ENCODE measurements at regions of chr22 and their contacts with region 1.

Region 1: DNA sequence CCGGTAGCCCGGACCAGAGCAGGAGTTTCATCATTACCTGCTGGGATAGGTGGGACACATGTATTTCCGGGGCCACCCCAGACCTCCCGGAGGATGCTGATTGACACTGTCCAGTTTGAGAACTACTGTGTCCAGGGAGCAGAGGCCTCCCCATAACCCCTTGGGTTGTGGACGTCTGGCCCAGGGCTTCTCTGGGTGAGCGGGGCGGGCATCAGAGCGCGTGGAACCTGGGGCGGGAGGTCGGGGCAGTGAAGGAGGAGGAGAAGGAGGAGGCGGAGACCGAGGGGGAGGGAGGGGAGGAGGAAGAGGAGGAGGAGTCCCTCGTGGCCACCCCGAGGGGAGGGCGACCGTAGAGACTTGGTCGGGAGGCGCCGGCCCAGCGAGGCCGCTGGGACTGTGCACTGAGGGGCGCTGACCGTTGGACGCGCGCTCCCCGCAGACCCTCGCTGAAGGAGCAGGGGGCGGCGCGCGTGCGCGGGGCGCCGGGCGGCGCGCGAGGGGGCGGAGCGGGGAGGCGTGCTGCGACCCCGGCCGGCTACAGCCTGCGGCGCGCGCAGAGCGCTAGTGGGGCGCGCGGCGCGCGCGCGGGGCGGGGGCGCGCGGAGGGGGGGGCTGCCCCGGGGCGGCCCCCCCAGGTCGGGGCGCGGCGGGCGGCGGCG is at the start of gene GRK3:
- DNase-seq: peak; percentile 77
- H3K4me3 ChIP-seq: peak within 1 kb of the TSS; percentile 96
- H3K27ac ChIP-seq: peak within 1 kb of the TSS; percentile 81
- H3K4me1 ChIP-seq: peaks cover 52% of the 10 kb centered on the region
- CTCF ChIP-seq: no peak
- total RNA-seq, gene GRK3: 11.1 and 14.2 TPM in 2 replicates

Region 2: DNA sequence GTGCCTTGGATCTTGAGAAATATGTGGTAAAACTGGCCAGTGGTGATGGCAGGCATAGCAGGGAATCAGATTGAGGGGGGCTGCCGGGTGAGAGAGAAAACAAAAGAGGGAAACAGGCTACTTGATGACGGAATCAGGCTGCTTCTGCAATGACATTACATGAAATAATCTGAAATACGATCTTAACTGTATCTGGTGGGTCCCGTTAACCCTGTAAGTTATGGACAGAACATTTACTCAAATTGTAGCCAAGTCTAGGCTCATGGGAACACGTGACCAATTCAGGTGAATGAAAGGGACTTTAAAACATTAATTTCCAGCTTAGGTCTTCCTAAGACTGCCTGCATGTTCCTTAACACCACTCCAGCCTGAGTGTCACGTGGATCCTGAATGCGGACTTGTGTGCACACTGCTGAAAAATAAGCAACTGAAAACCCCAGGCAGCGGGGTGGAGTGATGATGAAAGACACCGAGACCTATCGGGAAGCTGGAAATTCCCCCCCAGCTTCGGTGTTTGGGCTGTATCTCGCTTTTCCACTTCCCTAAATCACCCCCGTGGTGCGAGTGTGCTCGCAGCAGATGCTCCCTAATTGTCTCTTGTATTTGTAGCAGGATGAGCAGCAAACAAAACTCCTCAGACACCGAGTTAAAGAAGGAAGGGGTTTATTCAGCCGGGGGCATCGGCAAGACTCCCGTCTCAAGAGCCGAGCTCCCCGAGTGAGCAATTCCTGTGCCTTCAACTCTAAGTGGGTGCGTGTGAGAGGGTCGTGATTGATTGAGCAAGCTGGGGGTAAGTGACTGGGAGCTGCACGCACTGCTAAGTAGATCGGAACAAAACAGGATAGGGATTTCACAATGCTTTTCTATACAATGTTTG is 145.0 kb before region 1 on chr22:
- CTCF ChIA-PET with region 1: no interaction called
- POLR2A ChIA-PET with region 1: interaction called, 3 read pairs
- intact Hi-C with region 1: loop called (anchors 2 kb)
- DNase-seq: peak; percentile 9
- H3K4me3 ChIP-seq: peak overlapping the region; percentile 34
- H3K27ac ChIP-seq: no peak overlapping the region
- H3K4me1 ChIP-seq: peaks cover 32% of the 10 kb centered on the region
- CTCF ChIP-seq: no peak

Region 3: GRCh38 chr22:25465949-25466348 is 98.5 kb before region 1 on chr22:
- CTCF ChIA-PET with region 1: no interaction called
- POLR2A ChIA-PET with region 1: no interaction called
- intact Hi-C with region 1: loop called (anchors 2 kb)
- DNase-seq: no peak
- H3K4me3 ChIP-seq: no peak overlapping the region
- H3K27ac ChIP-seq: no peak overlapping the region
- H3K4me1 ChIP-seq: no peaks in the 10 kb centered on the region
- CTCF ChIP-seq: no peak

Region 4: GRCh38 chr22:25627271-25627852 is 62.9 kb after region 1 on chr22:
- CTCF ChIA-PET with region 1: no interaction called
- POLR2A ChIA-PET with region 1: no interaction called
- intact Hi-C with region 1: loop called (anchors 5 kb)
- DNase-seq: peak; percentile 43
- H3K4me3 ChIP-seq: peak overlapping the region; percentile 18
- H3K27ac ChIP-seq: peak overlapping the region; percentile 71
- H3K4me1 ChIP-seq: peaks cover 46% of the 10 kb centered on the region
- CTCF ChIP-seq: no peak

Region 5: GRCh38 chr22:25658633-25659032 is 94.2 kb after region 1 on chr22:
- CTCF ChIA-PET with region 1: no interaction called
- POLR2A ChIA-PET with region 1: no interaction called
- intact Hi-C with region 1: loop called (anchors 2 kb)
- DNase-seq: no peak
- H3K4me3 ChIP-seq: no peak overlapping the region
- H3K27ac ChIP-seq: no peak overlapping the region
- H3K4me1 ChIP-seq: peaks cover 14% of the 10 kb centered on the region
- CTCF ChIP-seq: no peak

Region 6: GRCh38 chr22:25702040-25702439 is 137.6 kb after region 1 on chr22:
- CTCF ChIA-PET with region 1: no interaction called
- POLR2A ChIA-PET with region 1: interaction called, 3 read pairs
- intact Hi-C with region 1: loop called (anchors 5 kb)
- DNase-seq: peak; percentile 30
- H3K4me3 ChIP-seq: no peak overlapping the region
- H3K27ac ChIP-seq: no peak overlapping the region
- H3K4me1 ChIP-seq: peaks cover 3% of the 10 kb centered on the region
- CTCF ChIP-seq: peak; percentile 83

Region 7: DNA sequence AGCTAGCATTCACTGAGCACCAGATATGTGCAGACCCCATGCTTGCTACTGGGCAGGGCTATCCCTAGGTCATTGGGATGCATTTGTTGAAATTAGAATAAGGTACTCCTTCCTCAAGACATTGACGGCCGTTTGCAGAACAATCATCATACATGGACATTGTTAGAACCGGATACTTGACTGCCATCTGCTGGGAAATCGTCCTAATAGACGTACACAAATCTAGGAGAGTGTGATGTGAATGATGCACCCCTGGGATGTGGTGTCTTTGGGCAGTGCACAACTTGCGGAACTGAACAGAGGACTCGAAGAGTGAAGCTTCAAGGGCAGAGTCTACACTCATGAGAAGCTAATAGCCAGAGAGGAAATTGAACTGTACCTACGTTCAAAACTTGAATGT is 213.4 kb after region 1 on chr22:
- CTCF ChIA-PET with region 1: no interaction called
- POLR2A ChIA-PET with region 1: no interaction called
- intact Hi-C with region 1: loop called (anchors 5 kb)
- DNase-seq: peak; percentile 48
- H3K4me3 ChIP-seq: no peak overlapping the region
- H3K27ac ChIP-seq: no peak overlapping the region
- H3K4me1 ChIP-seq: no peaks in the 10 kb centered on the region
- CTCF ChIP-seq: peak; percentile 66